Activated CD8-positive, alpha-beta T cell treated with anti-CD3 and anti-CD28 coated beads for 36 hours (primary cell): ENCODE measurements at regions of chr12 and their contacts with region 1.

Region 1: GRCh38 chr12:88141770-88142609 is at the starts of genes CEP290 and TMTC3:
- DNase-seq: peak; percentile 96
- ATAC-seq: peak; percentile 97
- H3K4me3 Mint-ChIP-seq: peak within 1 kb of the TSS; percentile 97
- H3K27ac Mint-ChIP-seq: peak within 1 kb of the TSS; percentile 95
- H3K4me1 Mint-ChIP-seq: peaks cover 33% of the 10 kb centered on the region
- H3K27me3 Mint-ChIP-seq: no peaks in the 10 kb centered on the region
- CTCF ChIP-seq: no peak
- total RNA-seq, gene CEP290: 15.2 to 15.3 TPM
- total RNA-seq, gene TMTC3: 4.7 to 5.0 TPM

Region 2: GRCh38 chr12:87975879-87976278 is 166.1 kb before region 1 on chr12:
- CTCF ChIA-PET with region 1: no interaction called
- POLR2A ChIA-PET with region 1: no interaction called
- intact Hi-C with region 1: no loop called
- DNase-seq: no peak
- ATAC-seq: no peak
- H3K4me3 Mint-ChIP-seq: no peak overlapping the region
- H3K27ac Mint-ChIP-seq: no peak overlapping the region
- H3K4me1 Mint-ChIP-seq: no peaks in the 10 kb centered on the region
- H3K27me3 Mint-ChIP-seq: peaks cover 4% of the 10 kb centered on the region
- CTCF ChIP-seq: no peak

Region 3: DNA sequence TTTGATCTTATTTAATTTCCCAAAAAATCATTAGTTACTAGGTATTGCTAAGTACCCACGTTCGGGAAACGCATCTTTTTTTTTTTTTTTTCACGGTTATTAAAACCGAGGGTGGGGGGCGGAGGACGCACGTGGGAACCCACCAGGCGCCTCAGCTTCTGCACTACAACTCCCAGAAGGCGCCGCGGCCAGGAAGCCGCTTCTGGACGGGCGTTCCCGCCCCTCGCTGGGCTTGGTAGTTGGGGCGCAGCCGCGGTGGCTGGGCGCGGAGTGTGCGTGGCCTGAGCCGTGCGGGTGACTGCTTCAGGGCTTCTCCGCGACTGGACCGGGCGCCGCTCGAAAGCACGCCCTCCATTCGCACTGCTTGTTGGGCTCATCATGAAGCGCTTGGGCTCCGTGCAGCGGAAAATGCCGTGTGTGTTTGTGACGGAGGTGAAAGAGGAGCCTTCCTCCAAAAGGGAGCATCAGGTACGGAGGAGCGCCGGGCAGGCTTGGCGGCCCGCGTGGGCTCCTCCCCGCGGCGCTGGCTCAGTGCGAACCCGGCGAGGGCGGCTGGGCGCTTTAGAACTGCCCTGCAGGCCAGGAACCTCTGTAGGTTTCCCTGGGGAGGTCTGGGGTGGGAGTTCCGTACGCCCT is 106.6 kb before region 1 on chr12:
- CTCF ChIA-PET with region 1: no interaction called
- POLR2A ChIA-PET with region 1: interaction called, 4 read pairs
- intact Hi-C with region 1: loop called (anchors 2 kb)
- DNase-seq: peak; percentile 93
- ATAC-seq: peak; percentile 99
- H3K4me3 Mint-ChIP-seq: peak overlapping the region; percentile 97
- H3K27ac Mint-ChIP-seq: peak overlapping the region; percentile 95
- H3K4me1 Mint-ChIP-seq: peaks cover 51% of the 10 kb centered on the region
- H3K27me3 Mint-ChIP-seq: no peaks in the 10 kb centered on the region
- CTCF ChIP-seq: no peak